B cell (primary cell): ENCODE measurements at regions of chr2 and their contacts with region 1.

Region 1: DNA sequence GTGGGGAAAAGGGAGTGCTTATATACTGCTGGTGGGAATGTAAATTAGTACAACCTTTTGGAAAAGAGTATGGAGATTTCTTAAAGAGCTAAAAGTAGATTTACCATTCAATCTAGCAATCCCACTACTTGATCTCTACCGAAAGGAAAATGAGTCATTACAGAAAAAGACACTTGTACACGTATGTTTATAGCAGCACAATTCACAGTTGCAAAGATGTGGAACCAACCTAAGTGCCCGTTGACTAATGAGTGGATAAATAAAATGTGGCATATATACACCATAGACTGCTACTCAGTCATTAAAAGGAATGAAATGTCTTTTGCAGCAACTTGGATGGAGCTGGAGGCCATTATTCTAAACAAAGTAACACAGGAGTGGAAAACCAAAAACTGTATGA is 29.5 kb downstream of the FLACC1 start:
- DNase-seq: no peak
- ATAC-seq: no peak
- H3K4me3 ChIP-seq: no peak overlapping the region
- H3K4me3 Mint-ChIP-seq: no peak overlapping the region
- H3K27ac ChIP-seq: no peak overlapping the region
- H3K27ac Mint-ChIP-seq: no peak overlapping the region
- H3K4me1 ChIP-seq: no peaks in the 10 kb centered on the region
- H3K4me1 Mint-ChIP-seq: no peaks in the 10 kb centered on the region
- H3K27me3 ChIP-seq: no peaks in the 10 kb centered on the region
- H3K27me3 Mint-ChIP-seq: no peaks in the 10 kb centered on the region
- CTCF ChIP-seq: no peak

Region 2: DNA sequence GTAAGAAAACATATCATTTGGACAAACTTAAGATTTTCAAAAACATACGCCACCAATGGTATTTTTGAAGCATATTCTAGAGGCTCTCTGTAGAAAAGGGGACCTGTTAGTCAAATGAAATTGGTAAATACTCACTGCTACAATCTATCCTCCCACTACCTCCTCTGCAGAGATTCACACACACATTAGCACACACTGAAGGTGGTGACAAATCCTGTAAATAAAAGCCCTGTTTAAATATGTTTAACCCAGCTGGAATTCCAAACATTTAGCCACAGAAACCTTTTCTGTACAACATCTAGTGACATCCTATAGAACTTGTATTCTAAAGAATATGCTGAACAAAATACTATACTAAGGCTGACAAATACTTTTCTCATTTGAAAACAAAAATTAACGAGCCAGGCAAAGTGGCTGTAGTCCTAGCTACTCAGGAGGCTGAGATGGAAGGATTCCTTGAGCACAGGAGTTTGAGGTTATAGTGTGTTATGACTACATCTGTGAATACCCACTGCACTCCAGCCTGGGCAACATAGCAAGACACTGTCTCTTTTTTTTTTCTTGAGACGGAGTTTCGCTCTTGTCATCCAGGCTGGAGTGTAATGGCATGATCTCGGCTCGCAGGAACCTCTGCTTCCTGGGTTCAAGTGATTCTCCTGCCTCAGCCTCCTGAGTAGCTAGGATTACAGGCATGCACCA is 427.2 kb after region 1 on chr2:
- CTCF ChIA-PET with region 1: no interaction called
- POLR2A ChIA-PET with region 1: no interaction called
- intact Hi-C with region 1: no loop called
- DNase-seq: no peak
- ATAC-seq: no peak
- H3K4me3 ChIP-seq: no peak overlapping the region
- H3K4me3 Mint-ChIP-seq: no peak overlapping the region
- H3K27ac ChIP-seq: no peak overlapping the region
- H3K27ac Mint-ChIP-seq: no peak overlapping the region
- H3K4me1 ChIP-seq: no peaks in the 10 kb centered on the region
- H3K4me1 Mint-ChIP-seq: no peaks in the 10 kb centered on the region
- H3K27me3 ChIP-seq: no peaks in the 10 kb centered on the region
- H3K27me3 Mint-ChIP-seq: no peaks in the 10 kb centered on the region
- CTCF ChIP-seq: no peak

Region 3: GRCh38 chr2:203097735-203098134 is 1770.1 kb after region 1 on chr2:
- CTCF ChIA-PET with region 1: no interaction called
- POLR2A ChIA-PET with region 1: no interaction called
- intact Hi-C with region 1: loop called (anchors 5 kb)
- DNase-seq: peak; percentile 7
- ATAC-seq: no peak
- H3K4me3 ChIP-seq: no peak overlapping the region
- H3K4me3 Mint-ChIP-seq: no peak overlapping the region
- H3K27ac ChIP-seq: no peak overlapping the region
- H3K27ac Mint-ChIP-seq: no peak overlapping the region
- H3K4me1 ChIP-seq: no peaks in the 10 kb centered on the region
- H3K4me1 Mint-ChIP-seq: no peaks in the 10 kb centered on the region
- H3K27me3 ChIP-seq: no peaks in the 10 kb centered on the region
- H3K27me3 Mint-ChIP-seq: no peaks in the 10 kb centered on the region
- CTCF ChIP-seq: no peak